ENCODE measurements at regions of chr14 and their contacts with region 1.

Region 1: DNA sequence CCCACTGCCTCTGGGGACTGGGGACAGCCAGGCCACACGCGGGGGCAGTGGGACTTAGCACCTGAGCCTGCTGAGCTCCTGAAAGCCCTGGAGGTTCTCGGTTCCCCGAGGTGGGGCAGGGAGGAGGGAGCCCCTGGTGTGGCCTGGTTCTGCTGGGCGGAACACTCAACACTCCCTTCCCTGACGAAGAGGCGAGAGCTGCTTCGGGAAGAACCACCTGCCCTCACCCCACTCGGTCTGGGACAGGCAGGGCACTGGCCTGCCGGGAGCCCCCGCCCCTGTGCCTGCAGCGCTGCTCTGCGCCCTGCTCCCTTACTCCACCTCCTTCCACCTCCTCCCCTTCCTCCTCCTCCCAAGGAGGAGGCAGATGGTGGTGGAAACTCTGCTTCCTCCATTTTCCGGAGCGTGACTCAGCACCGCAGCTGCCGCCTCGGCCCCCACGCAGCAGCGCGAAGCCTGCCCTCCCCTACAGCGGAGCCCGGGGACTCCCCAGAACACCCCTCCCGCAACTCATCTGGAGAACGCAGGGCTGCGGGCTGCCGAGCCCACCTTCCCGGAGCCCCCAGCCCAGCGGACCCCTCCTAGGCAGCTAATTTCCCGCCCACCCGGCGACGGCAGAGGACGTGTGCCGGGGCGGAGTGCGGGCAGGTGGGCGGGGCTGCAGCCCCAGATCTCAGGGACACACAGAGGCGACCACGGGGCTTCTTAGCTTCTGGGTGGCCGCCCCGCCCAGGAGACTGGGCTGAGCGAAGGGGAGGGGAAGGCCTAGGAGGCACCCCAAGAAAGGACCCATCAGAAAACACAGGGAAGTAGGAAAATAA is 11.7 kb upstream of the INF2 start:
- DNase-seq: peak; percentile 66
- ATAC-seq: peak; percentile 23
- H3K4me3 Mint-ChIP-seq: peak overlapping the region; percentile 67
- H3K27ac Mint-ChIP-seq: peak overlapping the region; percentile 79
- H3K4me1 Mint-ChIP-seq: peaks cover 50% of the 10 kb centered on the region
- H3K27me3 Mint-ChIP-seq: peaks cover 10% of the 10 kb centered on the region
- CTCF ChIP-seq: no peak

Region 2: DNA sequence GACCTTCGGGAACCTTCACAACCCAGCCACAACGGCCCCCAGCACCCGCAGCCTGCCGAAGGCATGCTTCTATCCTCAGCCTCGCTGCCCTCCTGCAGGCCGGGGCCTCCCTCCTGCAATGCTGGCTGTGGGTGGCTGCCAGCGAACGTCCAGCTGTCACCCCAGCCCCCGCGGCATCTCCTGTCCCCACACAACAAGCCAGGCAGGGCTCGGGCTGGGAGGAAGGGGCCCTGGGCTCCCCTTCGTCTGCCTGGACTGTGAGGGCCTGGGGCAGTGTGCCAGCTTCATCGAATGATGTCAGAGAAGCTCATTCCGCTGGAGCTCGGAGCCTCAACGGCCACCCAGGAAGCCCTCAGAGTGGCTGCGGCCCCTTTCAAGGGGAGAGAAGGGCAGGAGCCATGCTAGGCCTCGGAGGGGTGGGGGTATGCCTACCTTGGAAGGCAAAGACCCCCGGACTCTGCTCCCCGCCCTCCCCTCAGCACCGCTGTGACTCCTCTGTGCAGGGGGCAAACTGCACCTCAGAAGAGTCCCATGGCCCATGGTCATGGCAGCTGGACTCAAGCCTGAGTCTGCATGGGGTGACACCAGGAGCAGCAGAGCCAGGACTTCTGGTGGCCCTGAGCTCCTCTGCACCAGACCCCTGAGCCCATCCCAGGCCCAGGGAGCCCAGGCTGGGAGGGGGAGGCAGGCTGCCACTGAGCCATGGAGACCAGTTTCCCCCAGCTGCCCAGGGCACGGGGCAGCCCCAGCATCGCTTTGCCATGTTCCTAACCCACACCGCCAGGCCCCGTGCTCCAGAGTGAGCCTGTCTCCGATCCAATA is 122.9 kb before region 1 on chr14:
- CTCF ChIA-PET with region 1: no interaction called
- POLR2A ChIA-PET with region 1: no interaction called
- DNase-seq: peak; percentile 6
- ATAC-seq: no peak
- H3K4me3 Mint-ChIP-seq: no peak overlapping the region
- H3K27ac Mint-ChIP-seq: no peak overlapping the region
- H3K4me1 Mint-ChIP-seq: no peaks in the 10 kb centered on the region
- H3K27me3 Mint-ChIP-seq: no peaks in the 10 kb centered on the region
- CTCF ChIP-seq: no peak

Region 3: GRCh38 chr14:104650057-104650981 is 27.4 kb before region 1 on chr14:
- CTCF ChIA-PET with region 1: interaction called, 15 read pairs
- POLR2A ChIA-PET with region 1: no interaction called
- DNase-seq: peak; percentile 87
- ATAC-seq: peak; percentile 90
- H3K4me3 Mint-ChIP-seq: peak overlapping the region; percentile 78
- H3K27ac Mint-ChIP-seq: no peak overlapping the region
- H3K4me1 Mint-ChIP-seq: no peaks in the 10 kb centered on the region
- H3K27me3 Mint-ChIP-seq: peaks cover 38% of the 10 kb centered on the region
- CTCF ChIP-seq: peak; percentile 99

Region 4: GRCh38 chr14:104665657-104666522 is 11.8 kb before region 1 on chr14:
- CTCF ChIA-PET with region 1: interaction called, 35 read pairs
- POLR2A ChIA-PET with region 1: interaction called, 14 read pairs
- DNase-seq: no peak
- ATAC-seq: peak; percentile 72
- H3K4me3 Mint-ChIP-seq: no peak overlapping the region
- H3K27ac Mint-ChIP-seq: no peak overlapping the region
- H3K4me1 Mint-ChIP-seq: peaks cover 15% of the 10 kb centered on the region
- H3K27me3 Mint-ChIP-seq: peaks cover 1% of the 10 kb centered on the region
- CTCF ChIP-seq: no peak

Region 5: GRCh38 chr14:104694991-104695659 is 17.4 kb after region 1 on chr14:
- CTCF ChIA-PET with region 1: interaction called, 16 read pairs
- POLR2A ChIA-PET with region 1: interaction called, 4 read pairs
- DNase-seq: no peak
- ATAC-seq: peak; percentile 11
- H3K4me3 Mint-ChIP-seq: no peak overlapping the region
- H3K27ac Mint-ChIP-seq: no peak overlapping the region
- H3K4me1 Mint-ChIP-seq: peaks cover 28% of the 10 kb centered on the region
- H3K27me3 Mint-ChIP-seq: no peaks in the 10 kb centered on the region
- CTCF ChIP-seq: no peak

Region 6: DNA sequence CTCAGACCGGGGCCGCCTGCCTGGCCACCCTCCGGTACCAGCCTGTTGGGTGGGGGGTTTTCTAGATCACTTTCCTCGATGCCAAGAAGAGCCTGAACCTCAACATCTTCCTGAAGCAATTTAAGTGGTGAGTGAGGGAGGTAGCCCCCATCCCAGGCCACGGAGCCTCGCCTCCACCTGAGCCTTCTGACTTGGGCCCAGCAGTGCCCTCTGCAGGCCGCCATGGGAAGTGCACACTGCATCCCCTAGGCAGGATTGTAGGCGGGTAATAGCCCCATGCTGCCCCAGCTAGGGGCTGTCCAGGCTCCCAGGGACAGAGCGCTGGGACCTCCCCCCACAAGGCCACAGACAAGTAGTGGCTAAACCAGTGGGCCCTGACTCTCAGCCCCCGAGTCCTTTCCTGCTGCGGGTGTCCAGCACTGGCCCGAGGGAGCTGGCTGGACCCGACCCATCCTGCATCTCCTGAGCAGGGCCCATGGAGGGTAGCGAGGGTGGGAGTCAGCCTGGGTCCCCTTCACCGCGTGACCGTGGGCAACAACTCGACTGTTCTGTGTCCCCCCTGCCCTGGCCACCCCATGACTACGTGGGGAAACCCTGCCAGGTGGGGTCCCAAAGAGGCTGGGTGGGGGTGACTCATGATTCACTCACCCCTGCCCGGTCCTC is 31.0 kb after region 1 on chr14:
- CTCF ChIA-PET with region 1: interaction called, 13 read pairs
- POLR2A ChIA-PET with region 1: interaction called, 3 read pairs
- DNase-seq: peak; percentile 90
- ATAC-seq: peak; percentile 91
- H3K4me3 Mint-ChIP-seq: no peak overlapping the region
- H3K27ac Mint-ChIP-seq: no peak overlapping the region
- H3K4me1 Mint-ChIP-seq: peaks cover 3% of the 10 kb centered on the region; the same call in 1 of the 2 replicates
- H3K27me3 Mint-ChIP-seq: no peaks in the 10 kb centered on the region
- CTCF ChIP-seq: peak; percentile 98

Region 7: GRCh38 chr14:104723648-104724406 is 46.1 kb after region 1 on chr14 and contains the start of gene ADSS1:
- CTCF ChIA-PET with region 1: interaction called, 10 read pairs
- POLR2A ChIA-PET with region 1: no interaction called
- DNase-seq: peak; percentile 66
- ATAC-seq: peak; percentile 51
- H3K4me3 Mint-ChIP-seq: peak within 1 kb of the TSS; percentile 69
- H3K27ac Mint-ChIP-seq: no peak within 1 kb of the TSS
- H3K4me1 Mint-ChIP-seq: peaks cover 5% of the 10 kb centered on the region
- H3K27me3 Mint-ChIP-seq: peaks cover 2% of the 10 kb centered on the region; the same call in 1 of the 2 replicates
- CTCF ChIP-seq: peak; percentile 99
- total RNA-seq, gene ADSS1: 10.0 to 13.3 TPM (median 12.0 TPM) in 3 replicates

Region 8: DNA sequence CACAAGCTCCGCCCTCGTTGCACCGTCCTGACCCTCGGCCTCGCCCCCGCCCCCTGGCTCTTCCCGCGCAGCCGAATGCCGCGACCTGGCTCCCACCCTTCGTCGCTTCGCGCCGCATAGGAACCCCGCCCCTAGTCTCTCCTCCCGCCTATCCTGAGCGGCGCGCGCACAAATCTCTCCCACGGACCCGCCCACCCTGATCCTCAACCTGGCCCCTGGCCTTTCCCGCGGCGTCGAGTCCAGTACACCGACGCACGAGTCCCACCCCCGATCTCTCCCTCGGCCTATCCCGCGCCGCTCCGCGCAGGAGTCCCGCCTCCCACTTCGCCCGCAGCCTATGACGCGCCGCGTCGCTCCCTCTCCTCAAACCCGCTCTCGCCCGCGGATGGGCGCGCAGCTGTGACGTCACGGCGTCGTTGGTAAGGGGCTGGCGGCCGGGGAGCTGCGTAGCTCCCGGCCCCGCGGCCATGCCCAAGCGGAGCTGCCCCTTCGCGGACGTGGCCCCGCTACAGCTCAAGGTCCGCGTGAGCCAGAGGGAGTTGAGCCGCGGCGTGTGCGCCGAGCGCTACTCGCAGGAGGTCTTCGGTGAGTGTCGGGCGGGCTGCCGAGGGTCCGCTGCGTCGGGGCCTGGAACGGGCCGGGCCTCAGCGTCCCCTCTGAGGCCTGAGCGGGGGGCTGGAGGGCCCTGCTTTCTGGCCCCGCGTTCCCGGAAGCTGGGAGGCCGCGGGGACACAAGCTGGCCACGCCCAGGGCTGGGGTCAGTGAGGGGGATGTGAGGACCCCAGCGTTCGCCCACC is 75.2 kb after region 1 on chr14 and contains the start of gene SIVA1:
- CTCF ChIA-PET with region 1: interaction called, 10 read pairs
- POLR2A ChIA-PET with region 1: no interaction called
- DNase-seq: peak; percentile 100
- ATAC-seq: peak; percentile 95
- H3K4me3 Mint-ChIP-seq: peak within 1 kb of the TSS; percentile 95
- H3K27ac Mint-ChIP-seq: peak within 1 kb of the TSS; percentile 77
- H3K4me1 Mint-ChIP-seq: peaks cover 11% of the 10 kb centered on the region
- H3K27me3 Mint-ChIP-seq: peaks cover 14% of the 10 kb centered on the region
- CTCF ChIP-seq: no peak
- total RNA-seq, gene SIVA1: 113 to 128 TPM (median 124 TPM) in 3 replicates